Activated CD4-positive, alpha-beta T cell treated with anti-CD3 and anti-CD28 coated beads for 36 hours (primary cell): ENCODE measurements at regions of chrX and their contacts with region 1.

Region 1: DNA sequence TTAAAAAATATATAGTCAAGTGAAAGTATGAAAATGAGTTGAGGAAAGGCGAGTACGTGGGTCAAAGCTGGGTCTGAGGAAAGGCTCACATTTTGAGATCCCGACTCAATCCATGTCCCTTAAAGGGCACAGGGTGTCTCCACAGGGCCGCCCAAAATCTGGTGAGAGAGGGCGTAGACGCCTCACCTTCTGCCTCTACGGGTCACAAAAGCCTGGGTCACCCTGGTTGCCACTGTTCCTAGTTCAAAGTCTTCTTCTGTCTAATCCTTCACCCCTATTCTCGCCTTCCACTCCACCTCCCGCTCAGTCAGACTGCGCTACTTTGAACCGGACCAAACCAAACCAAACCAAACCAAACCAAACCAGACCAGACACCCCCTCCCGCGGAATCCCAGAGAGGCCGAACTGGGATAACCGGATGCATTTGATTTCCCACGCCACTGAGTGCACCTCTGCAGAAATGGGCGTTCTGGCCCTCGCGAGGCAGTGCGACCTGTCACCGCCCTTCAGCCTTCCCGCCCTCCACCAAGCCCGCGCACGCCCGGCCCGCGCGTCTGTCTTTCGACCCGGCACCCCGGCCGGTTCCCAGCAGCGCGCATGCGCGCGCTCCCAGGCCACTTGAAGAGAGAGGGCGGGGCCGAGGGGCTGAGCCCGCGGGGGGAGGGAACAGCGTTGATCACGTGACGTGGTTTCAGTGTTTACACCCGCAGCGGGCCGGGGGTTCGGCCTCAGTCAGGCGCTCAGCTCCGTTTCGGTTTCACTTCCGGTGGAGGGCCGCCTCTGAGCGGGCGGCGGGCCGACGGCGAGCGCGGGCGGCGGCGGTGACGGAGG is at the start of gene FMR1:
- DNase-seq: peak; percentile 95
- ATAC-seq: peak; percentile 88
- H3K4me3 Mint-ChIP-seq: peak within 1 kb of the TSS; percentile 98
- H3K27ac Mint-ChIP-seq: peak within 1 kb of the TSS; percentile 95
- H3K4me1 Mint-ChIP-seq: peaks cover 28% of the 10 kb centered on the region
- H3K27me3 Mint-ChIP-seq: no peaks in the 10 kb centered on the region
- total RNA-seq, gene FMR1: 30.7 to 32.1 TPM

Region 2: DNA sequence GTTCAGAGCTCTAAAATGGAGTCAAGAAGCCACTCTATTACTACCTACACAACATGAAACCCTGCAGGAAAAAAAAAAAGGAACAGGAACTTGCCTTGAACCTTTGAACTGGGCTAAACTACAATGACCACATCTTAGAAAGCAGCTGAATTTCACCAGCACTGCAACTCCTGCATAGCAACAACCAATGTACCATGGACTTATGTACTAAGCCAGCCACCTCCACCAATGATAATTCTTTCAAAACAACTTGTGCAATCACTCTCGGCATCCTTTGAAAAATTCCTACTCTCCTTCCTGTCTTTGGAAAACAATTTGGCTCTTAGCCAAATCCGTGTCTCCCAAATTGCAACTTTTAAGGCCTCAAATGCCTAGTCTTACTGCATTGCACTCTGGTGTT is 26.4 kb before region 1 on chrX:
- CTCF ChIA-PET with region 1: no interaction called
- POLR2A ChIA-PET with region 1: no interaction called
- intact Hi-C with region 1: no loop called
- DNase-seq: no peak
- ATAC-seq: no peak
- H3K4me3 Mint-ChIP-seq: no peak overlapping the region
- H3K27ac Mint-ChIP-seq: no peak overlapping the region
- H3K4me1 Mint-ChIP-seq: peaks cover 2% of the 10 kb centered on the region
- H3K27me3 Mint-ChIP-seq: no peaks in the 10 kb centered on the region

Region 3: DNA sequence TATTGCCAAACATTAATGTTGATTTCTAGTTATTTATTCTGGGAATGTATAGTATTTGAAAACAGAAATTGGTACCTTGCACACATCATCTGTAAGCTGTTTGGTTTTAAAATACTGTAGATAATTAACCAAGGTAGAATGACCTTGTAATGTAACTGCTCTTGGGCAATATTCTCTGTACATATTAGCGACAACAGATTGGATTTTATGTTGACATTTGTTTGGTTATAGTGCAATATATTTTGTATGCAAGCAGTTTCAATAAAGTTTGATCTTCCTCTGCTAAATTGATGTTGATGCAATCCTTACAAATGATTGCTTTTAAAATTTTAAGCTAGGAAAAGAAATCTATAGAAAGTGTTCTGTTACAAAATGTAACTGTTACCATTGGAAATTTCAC is 38.9 kb after region 1 on chrX:
- CTCF ChIA-PET with region 1: no interaction called
- POLR2A ChIA-PET with region 1: no interaction called
- intact Hi-C with region 1: no loop called
- DNase-seq: no peak
- ATAC-seq: no peak
- H3K4me3 Mint-ChIP-seq: no peak overlapping the region
- H3K27ac Mint-ChIP-seq: no peak overlapping the region
- H3K4me1 Mint-ChIP-seq: no peaks in the 10 kb centered on the region
- H3K27me3 Mint-ChIP-seq: no peaks in the 10 kb centered on the region

Region 4: GRCh38 chrX:148298737-148299136 is 387.3 kb after region 1 on chrX:
- CTCF ChIA-PET with region 1: no interaction called
- POLR2A ChIA-PET with region 1: no interaction called
- intact Hi-C with region 1: no loop called
- DNase-seq: peak; percentile 5
- ATAC-seq: peak; percentile 80
- H3K4me3 Mint-ChIP-seq: no peak overlapping the region
- H3K27ac Mint-ChIP-seq: no peak overlapping the region
- H3K4me1 Mint-ChIP-seq: peaks cover 7% of the 10 kb centered on the region
- H3K27me3 Mint-ChIP-seq: no peaks in the 10 kb centered on the region

Region 5: GRCh38 chrX:148380650-148381561 is 469.5 kb after region 1 on chrX:
- CTCF ChIA-PET with region 1: no interaction called
- POLR2A ChIA-PET with region 1: no interaction called
- intact Hi-C with region 1: loop called (anchors 2 to 10 kb)
- DNase-seq: peak; percentile 66
- ATAC-seq: peak; percentile 96
- H3K4me3 Mint-ChIP-seq: peak overlapping the region; percentile 62
- H3K27ac Mint-ChIP-seq: peak overlapping the region; percentile 93
- H3K4me1 Mint-ChIP-seq: peaks cover 32% of the 10 kb centered on the region
- H3K27me3 Mint-ChIP-seq: no peaks in the 10 kb centered on the region

Region 6: DNA sequence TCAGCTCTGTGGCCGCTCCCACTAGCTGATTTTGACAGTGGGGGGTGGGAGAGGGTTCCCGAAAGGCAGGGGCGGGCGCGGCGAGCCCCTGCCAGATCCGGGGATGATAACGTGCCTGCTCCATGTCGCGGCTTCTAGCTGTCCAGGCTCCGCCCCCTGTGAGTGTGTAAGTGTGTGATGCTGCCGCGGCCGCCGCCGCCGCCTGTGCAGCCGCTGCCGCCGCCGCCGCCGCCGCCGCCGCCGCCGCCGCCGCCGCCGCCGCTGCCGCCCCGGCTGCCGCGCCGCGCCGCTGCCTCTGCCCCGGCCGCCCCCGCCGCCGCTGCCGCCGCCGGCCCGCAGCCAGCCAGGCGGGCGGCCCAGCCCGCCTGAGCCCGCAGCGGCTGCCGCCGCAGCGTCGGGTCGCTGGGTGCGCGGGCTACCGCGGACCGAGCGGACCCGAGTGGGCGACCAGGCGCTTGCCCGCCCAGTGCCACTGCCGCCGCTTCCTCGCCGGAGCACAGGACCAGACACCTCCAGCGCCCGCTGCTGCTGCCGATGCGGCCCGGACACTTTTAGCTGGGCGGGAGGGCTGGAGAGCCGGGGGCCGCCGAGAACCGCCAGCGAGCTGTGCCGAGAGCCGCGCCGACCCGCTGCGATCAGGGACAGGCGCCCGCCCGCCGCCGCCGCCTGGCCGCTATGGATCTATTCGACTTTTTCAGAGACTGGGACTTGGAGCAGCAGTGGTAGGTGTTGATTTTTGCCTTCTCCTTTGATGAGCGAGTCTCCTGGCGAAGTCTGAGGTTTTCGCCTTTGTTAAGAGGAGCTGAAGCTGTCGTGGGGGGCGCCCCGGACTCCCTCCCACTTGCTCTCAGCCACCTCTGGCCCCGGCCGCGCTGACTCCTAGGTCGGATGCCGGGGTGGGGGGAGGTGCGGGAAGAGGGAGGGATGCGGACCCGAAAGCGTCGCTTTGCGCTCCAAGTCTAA is 589.3 kb after region 1 on chrX and contains the start of gene AFF2:
- CTCF ChIA-PET with region 1: no interaction called
- POLR2A ChIA-PET with region 1: no interaction called
- intact Hi-C with region 1: loop called in 1 of 2 experiments (anchors 10 kb)
- DNase-seq: peak; percentile 71
- ATAC-seq: peak; percentile 80
- H3K4me3 Mint-ChIP-seq: peak within 1 kb of the TSS; percentile 73
- H3K27ac Mint-ChIP-seq: no peak within 1 kb of the TSS
- H3K4me1 Mint-ChIP-seq: peaks cover 14% of the 10 kb centered on the region
- H3K27me3 Mint-ChIP-seq: peaks cover 2% of the 10 kb centered on the region
- total RNA-seq, gene AFF2: 1.3 to 2.2 TPM

Region 7: DNA sequence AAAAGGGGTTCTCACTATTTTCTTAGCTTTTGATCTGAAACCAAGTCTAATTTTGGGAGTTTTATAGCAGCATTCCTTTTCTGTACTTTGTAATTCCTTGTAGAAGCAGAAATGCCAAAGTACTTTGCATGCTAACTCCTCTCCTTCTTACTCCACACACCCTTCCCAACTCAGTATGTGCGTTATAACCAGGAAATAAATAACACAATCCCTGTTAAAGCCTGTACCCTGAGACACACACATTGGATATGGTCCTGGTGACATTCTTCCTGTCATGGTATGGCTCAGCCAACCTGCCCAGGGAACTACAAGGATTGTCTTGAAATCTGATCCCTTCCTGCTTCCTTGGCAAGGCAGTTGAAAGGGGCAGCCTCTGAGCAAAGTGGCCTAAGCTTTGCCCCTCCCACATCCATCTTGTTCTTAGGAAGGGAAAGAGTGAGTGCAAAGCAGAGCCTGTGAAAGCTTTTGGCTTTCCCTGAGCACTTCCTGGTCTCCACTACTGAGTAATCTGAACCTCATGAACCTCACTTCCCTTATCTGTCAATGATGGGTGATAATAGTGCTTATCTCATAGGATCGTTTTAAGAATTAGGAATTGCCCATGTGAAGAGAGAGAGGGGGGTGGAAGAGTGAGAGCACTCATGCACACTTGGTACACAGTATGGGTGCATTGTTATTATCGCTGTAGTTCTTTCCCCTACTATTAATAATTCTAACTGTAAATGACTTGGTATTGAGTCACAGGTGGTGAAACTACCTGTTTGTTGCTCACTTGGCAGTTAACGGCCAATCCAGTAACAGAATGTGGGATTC is 698.3 kb after region 1 on chrX:
- CTCF ChIA-PET with region 1: no interaction called
- POLR2A ChIA-PET with region 1: no interaction called
- intact Hi-C with region 1: loop called in 1 of 2 experiments (anchors 10 kb)
- DNase-seq: peak; percentile 3
- ATAC-seq: peak; percentile 76
- H3K4me3 Mint-ChIP-seq: no peak overlapping the region
- H3K27ac Mint-ChIP-seq: no peak overlapping the region
- H3K4me1 Mint-ChIP-seq: peaks cover 24% of the 10 kb centered on the region
- H3K27me3 Mint-ChIP-seq: no peaks in the 10 kb centered on the region

Region 8: DNA sequence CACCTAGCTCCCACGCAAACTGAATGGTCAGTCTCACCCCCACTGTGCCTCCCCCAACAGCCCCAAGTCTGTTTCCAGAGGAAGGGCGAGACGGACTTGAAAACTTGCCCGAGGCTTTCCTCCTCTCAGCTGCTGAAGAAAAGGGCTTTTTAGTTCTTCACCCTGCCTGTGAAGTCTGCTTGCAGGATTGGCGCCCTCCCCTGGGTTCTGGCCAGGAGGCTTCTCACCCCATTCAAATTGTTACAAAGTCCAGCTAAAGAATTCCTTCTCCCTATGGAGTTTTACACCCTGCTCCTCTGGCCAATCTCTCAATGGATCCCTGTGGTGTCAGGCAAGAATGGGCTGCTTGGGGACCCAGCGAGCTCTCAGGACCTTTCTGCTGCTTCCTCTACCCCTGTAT is 830.0 kb after region 1 on chrX:
- CTCF ChIA-PET with region 1: no interaction called
- POLR2A ChIA-PET with region 1: no interaction called
- intact Hi-C with region 1: no loop called
- DNase-seq: no peak
- ATAC-seq: no peak
- H3K4me3 Mint-ChIP-seq: no peak overlapping the region
- H3K27ac Mint-ChIP-seq: no peak overlapping the region
- H3K4me1 Mint-ChIP-seq: peaks cover 4% of the 10 kb centered on the region
- H3K27me3 Mint-ChIP-seq: no peaks in the 10 kb centered on the region